Activated CD4-positive, alpha-beta memory T cell treated with anti-CD3 and anti-CD28 coated beads, Interleukin-2, amount 10 ng/mL, durations not matched to agents 7 days and 5 days (primary cell): ENCODE measurements at regions of chr19 and their contacts with region 1.

Region 1: DNA sequence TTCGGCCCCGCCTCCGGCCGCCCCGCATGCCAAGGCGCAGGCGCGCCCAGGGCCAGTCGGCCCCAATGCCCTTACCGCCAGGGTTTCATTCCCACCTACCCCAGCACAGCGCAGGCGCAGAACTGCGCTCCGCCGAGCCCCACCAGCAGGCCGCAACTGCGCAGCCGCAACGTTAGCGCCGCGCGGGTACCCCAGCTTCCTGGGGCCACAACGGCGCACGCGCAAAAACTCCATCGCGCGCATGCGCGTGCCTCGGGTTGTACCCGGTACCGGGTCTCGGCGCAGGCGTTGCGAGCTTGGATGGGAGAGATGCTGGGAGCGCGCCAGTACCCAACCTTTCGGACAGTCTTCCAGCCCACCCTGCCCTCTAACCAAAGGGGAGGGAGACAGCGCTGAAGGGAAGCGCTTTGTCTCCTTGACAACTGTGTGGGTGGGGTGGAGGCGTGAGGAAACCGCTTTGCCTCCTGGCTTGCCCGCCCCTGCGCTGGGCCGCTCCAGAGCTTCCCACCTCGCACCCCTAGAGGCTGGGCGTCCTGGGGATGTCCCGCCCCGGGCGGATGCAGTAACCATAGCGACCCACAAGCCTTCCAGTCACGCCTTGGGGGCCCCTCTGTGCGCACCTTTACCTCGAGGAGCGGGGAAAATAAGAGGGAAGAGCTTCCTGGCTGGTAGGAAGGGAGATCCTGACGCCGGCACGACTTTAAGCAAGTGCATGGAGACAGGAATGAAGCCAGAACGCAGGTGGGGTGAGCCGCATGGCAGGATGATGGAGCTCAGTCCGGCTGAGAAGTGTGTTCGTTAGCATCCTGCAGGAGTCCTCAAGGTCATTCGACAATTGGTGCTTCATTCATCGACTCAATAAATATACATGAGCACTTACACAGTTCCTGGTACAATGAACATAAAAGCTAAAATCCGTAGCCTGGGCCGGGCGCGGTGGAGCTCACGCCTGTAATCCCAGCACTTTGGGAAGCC is 525 bp upstream of the MYPOP start:
- DNase-seq: peak; percentile 100
- H3K4me3 Mint-ChIP-seq: peak overlapping the region; percentile 98
- H3K27ac Mint-ChIP-seq: peak overlapping the region; percentile 82
- H3K4me1 Mint-ChIP-seq: peaks cover 26% of the 10 kb centered on the region
- H3K27me3 Mint-ChIP-seq: peaks cover 2% of the 10 kb centered on the region

Region 2: DNA sequence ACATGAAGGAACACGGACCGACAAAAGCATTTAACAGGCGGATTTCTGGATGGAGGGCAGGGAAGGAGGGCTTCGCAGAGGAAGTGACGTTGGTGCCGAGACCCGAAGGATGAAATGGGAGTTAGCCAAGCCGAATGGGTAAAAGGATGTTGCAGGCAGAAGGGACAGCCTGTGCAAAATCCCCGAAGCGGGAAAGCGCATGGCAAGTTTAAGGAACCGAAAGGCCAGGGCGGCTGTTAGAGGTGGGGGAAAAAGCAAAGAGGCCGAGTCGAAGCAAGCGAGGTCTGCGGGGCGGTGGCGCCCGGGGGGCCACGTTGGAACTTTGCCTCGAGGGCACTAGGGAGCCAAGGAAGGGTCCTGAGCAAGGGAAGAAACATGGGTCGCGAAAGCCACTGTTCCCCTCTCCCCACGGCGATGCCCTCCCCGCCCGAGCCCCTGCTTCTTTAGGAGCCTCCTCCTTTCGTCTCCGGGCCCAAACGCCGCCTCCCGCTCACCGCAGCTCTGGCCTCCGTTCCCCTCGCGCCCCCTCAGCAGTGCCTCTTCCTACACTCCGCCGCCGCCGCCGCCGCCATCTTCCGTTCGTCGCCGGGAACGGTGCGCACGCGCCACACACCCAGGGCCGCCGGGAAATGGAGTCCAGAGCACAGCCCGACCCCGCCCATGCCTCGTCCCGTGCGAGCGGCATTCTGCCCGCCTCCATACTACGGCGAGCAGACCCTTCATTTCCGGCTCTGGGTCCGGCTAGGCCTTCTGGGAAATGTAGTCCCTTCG is 40.2 kb before region 1 on chr19 and contains the start of gene SYMPK:
- CTCF ChIA-PET with region 1: interaction called, 11 read pairs
- POLR2A ChIA-PET with region 1: interaction called, 9 read pairs
- DNase-seq: peak; percentile 99
- H3K4me3 Mint-ChIP-seq: peak within 1 kb of the TSS; percentile 92
- H3K27ac Mint-ChIP-seq: peak within 1 kb of the TSS; percentile 96
- H3K4me1 Mint-ChIP-seq: peaks cover 36% of the 10 kb centered on the region
- H3K27me3 Mint-ChIP-seq: peaks cover 29% of the 10 kb centered on the region
- total RNA-seq, gene SYMPK: 88.3 to 89.2 TPM

Region 3: DNA sequence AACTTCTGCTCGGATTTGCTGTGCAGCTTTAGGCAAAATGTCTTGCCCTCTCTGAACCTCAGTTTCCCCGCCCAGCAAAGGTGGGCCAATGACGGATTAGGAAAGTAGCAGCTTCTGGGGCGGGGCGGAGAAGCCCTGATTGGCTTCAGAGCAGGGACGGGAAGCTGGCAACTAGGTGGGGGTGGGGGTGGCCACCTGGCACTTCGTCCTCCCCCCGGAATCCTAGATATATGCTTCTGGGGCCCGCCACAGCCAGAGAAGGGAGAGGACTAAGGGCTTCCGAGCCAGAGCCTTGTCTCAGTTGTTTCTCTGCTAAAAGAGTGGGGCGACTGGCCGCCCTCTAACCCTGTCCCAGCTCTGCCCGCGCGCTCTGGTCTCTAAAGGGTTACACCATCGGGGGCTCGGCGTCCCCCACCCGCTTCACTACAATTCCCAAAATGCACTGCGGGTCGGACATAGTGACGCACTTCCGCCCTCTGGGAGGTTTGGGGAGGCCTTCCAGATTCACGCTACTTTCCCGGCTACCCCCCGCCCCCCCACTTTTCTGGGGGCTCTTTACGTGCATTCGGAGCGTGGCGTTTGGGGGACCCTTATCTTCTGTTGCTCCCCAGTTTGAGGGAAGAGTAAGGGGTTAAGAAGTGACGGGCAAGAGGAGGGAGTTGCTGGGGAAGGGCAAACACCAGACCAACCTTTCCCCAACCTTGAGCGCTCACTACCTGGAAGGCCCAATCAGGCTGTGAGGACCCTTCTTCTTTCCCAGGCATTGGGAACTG is 16.3 kb before region 1 on chr19:
- CTCF ChIA-PET with region 1: interaction called, 17 read pairs
- POLR2A ChIA-PET with region 1: interaction called, 29 read pairs
- DNase-seq: peak; percentile 96
- H3K4me3 Mint-ChIP-seq: peak overlapping the region; percentile 84
- H3K27ac Mint-ChIP-seq: peak overlapping the region; percentile 91
- H3K4me1 Mint-ChIP-seq: peaks cover 29% of the 10 kb centered on the region
- H3K27me3 Mint-ChIP-seq: no peaks in the 10 kb centered on the region

Region 4: GRCh38 chr19:45913874-45914830 is 11.2 kb after region 1 on chr19 and contains the start of gene NANOS2:
- CTCF ChIA-PET with region 1: interaction called, 12 read pairs
- POLR2A ChIA-PET with region 1: interaction called, 34 read pairs
- DNase-seq: peak; percentile 43
- H3K4me3 Mint-ChIP-seq: no peak within 1 kb of the TSS
- H3K27ac Mint-ChIP-seq: peak within 1 kb of the TSS; percentile 42
- H3K4me1 Mint-ChIP-seq: peaks cover 29% of the 10 kb centered on the region
- H3K27me3 Mint-ChIP-seq: peaks cover 19% of the 10 kb centered on the region
- total RNA-seq, gene NANOS2: not detected

Region 5: DNA sequence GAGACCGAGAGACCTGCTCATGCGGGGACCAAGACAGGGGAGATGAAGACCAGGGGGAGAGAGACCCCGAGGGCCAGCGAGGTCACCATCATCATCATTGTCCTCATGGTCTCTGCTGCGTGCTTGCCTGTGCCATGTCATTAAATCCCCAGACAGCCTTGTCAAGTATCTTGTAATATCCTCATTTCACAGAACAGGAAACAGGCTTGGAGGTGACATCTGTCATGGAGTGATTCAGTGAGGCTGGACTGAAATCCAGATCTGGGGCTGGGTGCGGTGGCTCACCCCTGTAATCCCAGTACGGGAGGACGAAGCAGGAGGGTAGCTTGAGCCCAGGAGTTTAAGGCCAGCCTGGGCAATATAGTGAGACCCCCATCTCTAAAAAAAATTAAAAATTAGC is 17.5 kb after region 1 on chr19:
- CTCF ChIA-PET with region 1: interaction called, 12 read pairs
- POLR2A ChIA-PET with region 1: interaction called, 34 read pairs
- DNase-seq: peak; percentile 31
- H3K4me3 Mint-ChIP-seq: peak overlapping the region; percentile 41
- H3K27ac Mint-ChIP-seq: peak overlapping the region; percentile 65
- H3K4me1 Mint-ChIP-seq: peaks cover 52% of the 10 kb centered on the region
- H3K27me3 Mint-ChIP-seq: peaks cover 7% of the 10 kb centered on the region

Region 6: GRCh38 chr19:45927565-45928261 is 24.8 kb after region 1 on chr19:
- CTCF ChIA-PET with region 1: interaction called, 11 read pairs
- POLR2A ChIA-PET with region 1: interaction called, 16 read pairs
- DNase-seq: peak; percentile 93
- H3K4me3 Mint-ChIP-seq: peak overlapping the region; percentile 71
- H3K27ac Mint-ChIP-seq: peak overlapping the region; percentile 6
- H3K4me1 Mint-ChIP-seq: peaks cover 19% of the 10 kb centered on the region
- H3K27me3 Mint-ChIP-seq: peaks cover 28% of the 10 kb centered on the region

Region 7: DNA sequence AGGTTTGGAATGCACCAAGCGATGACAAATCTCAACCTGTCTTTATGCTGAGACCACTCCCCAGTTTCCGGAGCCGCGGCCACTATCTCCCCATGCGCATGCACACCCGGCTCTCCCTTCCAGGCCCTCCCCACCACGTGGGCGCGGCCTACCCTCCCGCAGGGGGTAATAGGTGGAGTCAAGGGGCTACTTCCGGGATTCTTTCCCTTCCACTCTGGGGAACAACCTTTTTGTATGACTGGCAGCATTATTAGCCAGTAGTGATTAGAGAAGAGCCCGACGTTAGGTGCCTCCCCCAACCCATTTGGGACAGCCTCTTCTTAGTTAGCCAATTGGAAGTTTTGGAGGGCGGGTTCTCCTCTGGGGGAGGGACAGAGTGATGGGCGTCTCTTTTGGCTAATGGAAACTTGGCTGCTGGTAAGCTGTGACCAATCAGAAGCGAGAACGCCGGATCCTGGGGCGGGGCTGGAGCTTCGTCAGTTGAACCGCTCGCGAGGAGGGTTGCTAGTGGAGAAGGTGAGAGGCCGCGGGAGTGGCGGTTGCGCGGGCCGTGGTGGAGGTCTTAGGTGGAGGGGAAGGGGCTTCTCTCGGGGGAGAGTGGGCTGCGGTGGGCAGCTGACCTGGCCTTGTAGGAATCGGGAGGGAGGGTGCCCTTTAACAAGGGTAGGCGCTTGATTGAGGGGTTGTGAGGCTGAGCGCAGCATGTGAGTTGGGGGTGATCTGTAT is 92.2 kb after region 1 on chr19 and contains the start of gene CCDC61:
- CTCF ChIA-PET with region 1: interaction called, 9 read pairs
- POLR2A ChIA-PET with region 1: interaction called, 16 read pairs
- DNase-seq: peak; percentile 97
- H3K4me3 Mint-ChIP-seq: no peak within 1 kb of the TSS
- H3K27ac Mint-ChIP-seq: no peak within 1 kb of the TSS
- H3K4me1 Mint-ChIP-seq: peaks cover 19% of the 10 kb centered on the region
- H3K27me3 Mint-ChIP-seq: peaks cover 8% of the 10 kb centered on the region
- total RNA-seq, gene CCDC61: 24.3 to 24.7 TPM